Thyroid gland (tissue), 4 donors: ENCODE measurements at regions of chr2 and their contacts with region 1.

Region 1: GRCh38 chr2:226791487-226792081 is 8.0 kb downstream of the IRS1 start:
- DNase-seq: peak; percentile 92 to 93
- H3K4me3 ChIP-seq: peak overlapping the region; percentile 33 to 76 (median 39)
- H3K27ac ChIP-seq: peak overlapping the region; percentile 84 to 98 (median 94)
- H3K4me1 ChIP-seq: peaks cover 33 to 41% of the 10 kb centered on the region in 2 donors
- H3K27me3 ChIP-seq: no peaks in the 10 kb centered on the region
- CTCF ChIP-seq: peak in 4 of 6 experiments; percentile 38 to 77 (median 62)
- POLR2A ChIP-seq: peak in 1 of 2 donors; percentile 77

Region 2: DNA sequence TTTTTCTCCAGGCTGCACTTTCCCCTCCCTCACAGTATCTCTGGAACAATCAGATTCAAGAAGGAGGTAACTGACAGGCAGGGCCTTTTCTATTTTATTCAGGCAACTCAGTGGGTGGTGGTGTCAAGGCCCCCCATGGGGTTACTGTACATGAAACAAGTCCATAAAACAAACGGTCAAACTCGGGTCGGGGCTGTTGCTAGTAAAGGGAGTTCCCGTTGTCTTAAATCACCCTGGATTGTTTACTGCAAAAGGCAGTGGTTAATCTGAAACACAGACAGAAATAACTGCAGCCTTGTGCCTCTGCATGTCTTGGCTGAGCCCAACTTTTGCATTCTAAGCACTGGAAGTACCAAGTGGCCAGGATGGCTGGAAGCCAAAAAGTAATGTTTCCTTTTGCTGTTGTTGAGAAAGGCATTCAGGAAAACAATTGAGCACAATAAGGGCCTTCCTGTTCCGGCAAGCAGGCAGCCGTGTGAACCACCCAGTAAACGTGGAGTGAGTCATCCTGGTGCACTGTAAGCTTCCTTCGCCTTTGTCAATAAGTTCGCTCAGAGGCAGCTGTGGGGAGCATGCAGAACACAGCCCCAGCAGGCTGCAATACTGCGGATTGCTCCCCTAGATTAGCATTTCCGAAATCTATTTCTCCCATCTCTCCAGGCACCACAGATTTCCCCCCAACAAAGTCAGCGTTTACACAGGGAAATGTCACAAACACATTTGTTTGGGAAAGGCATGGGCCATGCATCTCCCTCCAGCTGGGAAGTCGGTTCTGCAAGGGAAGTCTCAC is 141.5 kb before region 1 on chr2:
- intact Hi-C with region 1: loop called (anchors 10 kb)
- DNase-seq: peak; percentile 93
- H3K4me3 ChIP-seq: no peak overlapping the region
- H3K27ac ChIP-seq: peak overlapping the region; percentile 90 to 96 (median 92)
- H3K4me1 ChIP-seq: peaks cover 34 to 67% of the 10 kb centered on the region in 2 donors
- H3K27me3 ChIP-seq: no peaks in the 10 kb centered on the region
- CTCF ChIP-seq: no peak
- POLR2A ChIP-seq: peak in 1 of 2 donors; percentile 71